GM12878 (cell line): ENCODE measurements at regions of chr13 and their contacts with region 1.

Region 1: DNA sequence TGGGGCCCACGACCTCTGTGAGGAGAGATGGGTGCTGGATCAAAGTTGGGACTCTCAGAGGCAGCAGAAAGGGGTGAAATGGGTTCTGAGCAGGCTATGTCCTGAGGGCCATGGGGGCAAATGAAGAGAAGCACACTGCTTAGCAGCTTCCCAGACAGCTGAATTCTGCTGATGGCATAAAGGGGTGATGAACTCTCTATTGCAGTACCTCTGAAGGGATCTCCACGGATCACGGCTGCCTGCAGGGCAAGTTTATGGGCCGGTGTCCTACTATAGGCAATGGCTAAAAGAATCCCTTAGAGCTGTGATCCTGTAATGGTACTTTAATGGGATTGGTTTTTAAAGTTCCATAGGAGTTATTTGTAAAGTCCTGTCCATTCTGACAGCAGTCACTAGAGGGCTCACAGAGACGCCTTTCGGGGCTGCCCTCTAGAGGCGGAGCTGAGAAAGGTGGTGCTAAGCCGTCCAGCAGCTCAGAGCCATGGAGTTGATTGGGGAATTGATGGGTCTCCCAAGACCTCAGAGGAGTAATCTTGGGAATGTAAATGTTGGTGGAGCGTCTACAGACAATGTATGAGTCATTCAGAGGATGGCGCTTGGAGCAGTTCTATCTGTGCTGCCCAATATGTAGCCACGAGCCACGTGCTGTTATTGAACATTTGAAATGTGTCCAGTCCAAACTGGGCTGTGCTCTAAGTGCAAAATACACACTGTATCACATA is 287.3 kb downstream of the COG6 start:
- DNase-seq: peak; percentile 50
- ATAC-seq: peak; percentile 100
- H3K4me3 ChIP-seq: no peak overlapping the region
- H3K27ac ChIP-seq: no peak overlapping the region
- H3K4me1 ChIP-seq: no peaks in the 10 kb centered on the region
- H3K27me3 ChIP-seq: no peaks in the 10 kb centered on the region; a peak in 2 of 4 replicates
- CTCF ChIP-seq: peak; percentile 100; a peak in 5 of 6 replicates
- EP300 ChIP-seq: no peak
- POLR2A ChIP-seq: no peak
- RAD21 ChIP-seq: peak; percentile 95

Region 2: GRCh38 chr13:39684531-39685137 is 258.1 kb before region 1 on chr13:
- CTCF ChIA-PET with region 1: interaction called, 43 read pairs
- POLR2A ChIA-PET with region 1: no interaction called
- RAD21 ChIA-PET with region 1: interaction called, 9 read pairs
- SMC1A ChIA-PET with region 1: interaction called, 29 read pairs
- in situ Hi-C with region 1: no loop called
- intact Hi-C with region 1: loop called (anchors 10 kb)
- DNase-seq: no peak
- ATAC-seq: peak; percentile 60
- H3K4me3 ChIP-seq: no peak overlapping the region
- H3K27ac ChIP-seq: no peak overlapping the region
- H3K4me1 ChIP-seq: peaks cover 6% of the 10 kb centered on the region; the same call in 1 of the 2 replicates
- H3K27me3 ChIP-seq: no peaks in the 10 kb centered on the region
- CTCF ChIP-seq: peak in 1 of 3 experiments; percentile 18; a peak in 2 of 6 replicates
- EP300 ChIP-seq: no peak
- POLR2A ChIP-seq: no peak
- RAD21 ChIP-seq: peak; percentile 22; the same call in 1 of the 2 replicates

Region 3: DNA sequence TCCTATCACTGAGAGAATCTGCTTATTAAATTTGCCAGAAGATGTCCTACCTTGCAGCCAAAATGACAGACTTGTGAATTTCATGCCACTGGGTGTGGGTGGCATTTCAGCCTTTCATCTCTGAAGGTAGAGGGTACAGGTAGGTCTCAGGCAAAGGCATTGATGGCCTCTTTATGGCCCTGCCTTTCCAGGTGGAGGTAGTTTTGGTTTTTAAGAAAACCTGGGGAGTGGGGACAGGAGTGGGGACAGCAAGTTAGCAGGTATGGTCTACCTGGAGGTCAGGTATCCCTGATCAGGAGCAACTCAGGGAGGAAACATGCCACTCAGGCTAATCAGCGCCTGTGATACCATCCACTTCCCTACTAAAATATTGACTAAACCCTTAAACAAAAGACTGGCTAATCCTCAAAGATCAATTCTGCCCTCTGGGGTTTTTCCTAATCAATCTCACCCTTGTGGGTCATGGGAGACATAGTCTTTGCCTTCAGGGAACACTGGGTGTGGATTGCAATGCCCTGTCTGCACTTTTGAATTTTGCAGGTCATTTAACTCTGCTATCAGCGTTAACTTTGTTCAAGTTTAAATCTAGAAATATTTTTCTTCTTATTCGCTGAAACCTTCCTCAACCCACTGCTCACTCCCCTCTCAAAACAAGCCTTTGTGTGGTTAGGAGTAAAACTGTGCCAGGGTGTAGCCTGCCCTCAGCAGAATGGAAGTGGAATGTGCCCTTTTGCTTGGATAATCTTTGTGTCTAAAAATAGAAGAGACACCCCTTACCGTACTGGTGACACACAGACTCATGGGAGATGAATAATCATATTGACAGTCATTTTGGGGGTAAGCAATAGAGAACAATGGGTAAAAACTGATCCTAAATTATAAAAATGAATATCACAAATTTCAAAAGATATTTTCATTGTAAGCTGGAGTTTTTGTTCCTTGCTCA is 53.6 kb before region 1 on chr13:
- CTCF ChIA-PET with region 1: no interaction called
- POLR2A ChIA-PET with region 1: no interaction called
- RAD21 ChIA-PET with region 1: no interaction called
- SMC1A ChIA-PET with region 1: no interaction called
- in situ Hi-C with region 1: no loop called
- intact Hi-C with region 1: no loop called
- DNase-seq: no peak
- ATAC-seq: no peak
- H3K4me3 ChIP-seq: no peak overlapping the region
- H3K27ac ChIP-seq: no peak overlapping the region
- H3K4me1 ChIP-seq: no peaks in the 10 kb centered on the region
- H3K27me3 ChIP-seq: no peaks in the 10 kb centered on the region; a peak in 1 of 4 replicates
- CTCF ChIP-seq: no peak
- EP300 ChIP-seq: no peak
- POLR2A ChIP-seq: no peak
- RAD21 ChIP-seq: no peak

Region 4: DNA sequence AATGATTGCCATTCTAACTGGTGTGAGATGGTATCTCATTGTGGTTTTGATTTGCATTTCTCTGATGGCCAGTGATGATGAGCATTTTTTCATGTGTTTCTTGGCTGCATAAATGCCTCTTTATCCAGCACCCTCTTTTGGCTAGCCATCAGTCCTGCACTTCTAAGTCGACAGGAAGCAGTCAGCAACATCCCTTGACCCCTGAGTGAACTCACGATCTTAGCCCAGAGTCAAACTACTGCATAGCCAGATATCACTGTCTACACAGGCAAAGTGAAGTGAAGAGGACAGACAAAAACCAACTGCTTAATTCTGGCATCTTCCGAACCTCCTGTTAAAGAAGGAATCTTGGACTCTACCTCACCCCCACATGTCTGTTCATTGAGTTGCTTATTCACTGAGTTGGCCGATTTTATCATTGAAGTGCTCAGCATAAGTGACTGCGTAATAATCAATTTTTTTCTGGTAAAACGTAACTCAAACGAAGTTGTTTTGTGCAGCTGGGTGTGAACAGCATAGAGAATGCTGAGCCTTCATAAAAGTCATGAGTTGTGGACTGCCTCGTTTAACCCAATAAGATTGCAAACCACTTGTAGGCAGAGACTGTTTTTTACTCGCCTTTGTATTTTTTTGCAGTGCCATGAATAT is 16.9 kb after region 1 on chr13:
- CTCF ChIA-PET with region 1: interaction called, 39 read pairs
- POLR2A ChIA-PET with region 1: no interaction called
- RAD21 ChIA-PET with region 1: interaction called, 4 read pairs
- SMC1A ChIA-PET with region 1: interaction called, 3 read pairs
- in situ Hi-C with region 1: no loop called
- intact Hi-C with region 1: no loop called
- DNase-seq: no peak
- ATAC-seq: no peak
- H3K4me3 ChIP-seq: no peak overlapping the region
- H3K27ac ChIP-seq: no peak overlapping the region
- H3K4me1 ChIP-seq: peaks cover 8% of the 10 kb centered on the region; the same call in 1 of the 2 replicates
- H3K27me3 ChIP-seq: no peaks in the 10 kb centered on the region
- CTCF ChIP-seq: no peak
- EP300 ChIP-seq: no peak
- POLR2A ChIP-seq: no peak
- RAD21 ChIP-seq: no peak

Region 5: DNA sequence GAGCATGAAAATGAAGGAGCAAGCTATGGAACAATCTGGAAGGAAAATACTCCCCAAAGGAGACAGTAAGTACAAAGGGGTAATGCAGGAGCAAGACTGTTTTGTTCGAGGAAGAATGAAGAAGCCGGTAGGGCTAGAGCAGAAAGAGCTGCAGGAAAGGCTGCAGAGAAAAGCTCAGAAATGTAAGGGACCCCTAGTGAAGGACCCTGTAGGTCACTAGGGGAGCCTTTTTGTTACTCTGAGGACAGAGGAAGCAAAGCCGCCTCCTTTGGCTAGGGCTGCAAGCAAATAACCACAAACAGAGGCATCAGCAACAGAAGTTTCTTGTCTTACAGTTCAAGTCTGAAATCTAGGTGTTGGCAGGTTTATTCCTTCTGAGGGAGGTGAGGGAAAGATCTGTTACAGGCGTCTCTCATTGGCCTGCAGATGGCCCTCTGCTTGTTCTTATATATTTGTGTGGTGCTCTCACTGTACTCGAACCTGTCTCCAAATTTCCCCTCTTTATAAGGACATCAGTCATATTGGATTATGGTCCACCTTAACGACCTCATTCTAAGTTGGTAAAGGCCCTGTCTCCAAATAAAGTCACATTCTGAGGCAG is 75.0 kb after region 1 on chr13:
- CTCF ChIA-PET with region 1: interaction called, 11 read pairs
- POLR2A ChIA-PET with region 1: no interaction called
- RAD21 ChIA-PET with region 1: interaction called, 3 read pairs
- SMC1A ChIA-PET with region 1: no interaction called
- in situ Hi-C with region 1: no loop called
- intact Hi-C with region 1: no loop called
- DNase-seq: no peak
- ATAC-seq: no peak
- H3K4me3 ChIP-seq: no peak overlapping the region
- H3K27ac ChIP-seq: no peak overlapping the region
- H3K4me1 ChIP-seq: no peaks in the 10 kb centered on the region
- H3K27me3 ChIP-seq: no peaks in the 10 kb centered on the region; a peak in 1 of 4 replicates
- CTCF ChIP-seq: no peak
- EP300 ChIP-seq: no peak
- POLR2A ChIP-seq: no peak
- RAD21 ChIP-seq: no peak

Region 6: GRCh38 chr13:40060296-40061007 is 117.7 kb after region 1 on chr13:
- CTCF ChIA-PET with region 1: interaction called, 9 read pairs
- POLR2A ChIA-PET with region 1: no interaction called
- RAD21 ChIA-PET with region 1: interaction called, 5 read pairs
- SMC1A ChIA-PET with region 1: interaction called, 8 read pairs
- in situ Hi-C with region 1: no loop called
- intact Hi-C with region 1: loop called (anchors 2 kb)
- DNase-seq: peak; percentile 97
- ATAC-seq: peak; percentile 86
- H3K4me3 ChIP-seq: no peak overlapping the region
- H3K27ac ChIP-seq: peak overlapping the region; percentile 80
- H3K4me1 ChIP-seq: peaks cover 28% of the 10 kb centered on the region
- H3K27me3 ChIP-seq: no peaks in the 10 kb centered on the region
- CTCF ChIP-seq: no peak
- EP300 ChIP-seq: peak; percentile 65 to 79; a peak in 2 of 4 replicates
- POLR2A ChIP-seq: no peak
- RAD21 ChIP-seq: no peak

Region 7: GRCh38 chr13:40200273-40200978 is 257.7 kb after region 1 on chr13:
- CTCF ChIA-PET with region 1: no interaction called
- POLR2A ChIA-PET with region 1: no interaction called
- RAD21 ChIA-PET with region 1: no interaction called
- SMC1A ChIA-PET with region 1: no interaction called
- in situ Hi-C with region 1: no loop called
- intact Hi-C with region 1: no loop called
- DNase-seq: no peak
- ATAC-seq: no peak
- H3K4me3 ChIP-seq: no peak overlapping the region
- H3K27ac ChIP-seq: no peak overlapping the region
- H3K4me1 ChIP-seq: no peaks in the 10 kb centered on the region
- H3K27me3 ChIP-seq: peaks cover 0 to 1% of the 10 kb centered on the region in 2 experiments; a peak in 1 of 4 replicates
- CTCF ChIP-seq: no peak
- EP300 ChIP-seq: no peak
- POLR2A ChIP-seq: no peak
- RAD21 ChIP-seq: no peak